ENCODE measurements at regions of chr5 and their contacts with region 1.

Region 1: DNA sequence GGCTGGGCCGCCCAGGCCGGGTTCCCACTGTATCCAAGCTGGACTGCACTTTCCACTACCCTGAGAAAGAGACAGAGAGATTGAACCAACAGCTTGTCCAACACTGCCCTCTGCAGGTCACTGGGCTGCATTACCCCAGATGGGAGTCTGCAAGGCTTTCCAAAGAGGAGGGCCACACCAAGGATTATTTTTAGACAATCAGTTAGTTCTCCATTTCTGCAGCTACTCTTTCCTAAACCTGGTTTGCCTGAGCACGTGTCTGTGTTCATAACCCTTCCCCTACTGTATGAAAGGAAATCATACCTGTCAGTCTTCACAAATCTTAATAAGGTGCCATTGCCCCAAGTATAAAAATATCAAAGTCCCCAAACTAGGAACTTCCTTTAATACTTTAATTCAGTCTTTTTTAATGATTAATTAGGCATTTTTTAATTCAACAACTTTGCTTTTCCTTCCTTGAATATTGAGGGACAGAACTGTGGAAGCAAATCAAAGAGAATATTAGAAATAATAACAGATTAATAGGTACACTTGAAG is 13.4 kb upstream of the FGF1 start:
- DNase-seq: peak; percentile 94
- ATAC-seq: peak; percentile 95

Region 2: GRCh38 chr5:142611154-142611553 is 88.1 kb before region 1 on chr5:
- intact Hi-C with region 1: loop called (anchors 5 kb)
- DNase-seq: peak; percentile 88
- ATAC-seq: peak; percentile 85

Region 3: GRCh38 chr5:142655339-142656267 is 43.6 kb before region 1 on chr5:
- intact Hi-C with region 1: loop called (anchors 5 kb)
- DNase-seq: peak; percentile 93
- ATAC-seq: peak; percentile 94

Region 4: GRCh38 chr5:142872795-142873194 is 173.5 kb after region 1 on chr5:
- intact Hi-C with region 1: no loop called
- DNase-seq: no peak
- ATAC-seq: no peak

Measured in sciatic nerve (tissue), 2 donors.